Vagina (tissue), 2 donors: ENCODE measurements at regions of chr1 and their contacts with region 1.

Region 1: GRCh38 chr1:209692745-209693504 is 11.7 kb upstream of the HSD11B1 start:
- DNase-seq: no peak
- H3K4me3 ChIP-seq: no peak overlapping the region
- H3K27ac ChIP-seq: no peak overlapping the region
- H3K4me1 ChIP-seq: peaks cover 7% of the 10 kb centered on the region
- H3K27me3 ChIP-seq: no peaks in the 10 kb centered on the region
- CTCF ChIP-seq: peak; percentile 66 to 93 (median 71)
- POLR2A ChIP-seq: no peak

Region 2: GRCh38 chr1:209576798-209577197 is 116.1 kb before region 1 on chr1:
- intact Hi-C with region 1: loop called (anchors 5 kb)
- DNase-seq: no peak
- H3K4me3 ChIP-seq: no peak overlapping the region
- H3K27ac ChIP-seq: no peak overlapping the region
- H3K4me1 ChIP-seq: no peaks in the 10 kb centered on the region
- H3K27me3 ChIP-seq: no peaks in the 10 kb centered on the region
- CTCF ChIP-seq: peak; percentile 77 to 93 (median 81)
- POLR2A ChIP-seq: no peak

Region 3: DNA sequence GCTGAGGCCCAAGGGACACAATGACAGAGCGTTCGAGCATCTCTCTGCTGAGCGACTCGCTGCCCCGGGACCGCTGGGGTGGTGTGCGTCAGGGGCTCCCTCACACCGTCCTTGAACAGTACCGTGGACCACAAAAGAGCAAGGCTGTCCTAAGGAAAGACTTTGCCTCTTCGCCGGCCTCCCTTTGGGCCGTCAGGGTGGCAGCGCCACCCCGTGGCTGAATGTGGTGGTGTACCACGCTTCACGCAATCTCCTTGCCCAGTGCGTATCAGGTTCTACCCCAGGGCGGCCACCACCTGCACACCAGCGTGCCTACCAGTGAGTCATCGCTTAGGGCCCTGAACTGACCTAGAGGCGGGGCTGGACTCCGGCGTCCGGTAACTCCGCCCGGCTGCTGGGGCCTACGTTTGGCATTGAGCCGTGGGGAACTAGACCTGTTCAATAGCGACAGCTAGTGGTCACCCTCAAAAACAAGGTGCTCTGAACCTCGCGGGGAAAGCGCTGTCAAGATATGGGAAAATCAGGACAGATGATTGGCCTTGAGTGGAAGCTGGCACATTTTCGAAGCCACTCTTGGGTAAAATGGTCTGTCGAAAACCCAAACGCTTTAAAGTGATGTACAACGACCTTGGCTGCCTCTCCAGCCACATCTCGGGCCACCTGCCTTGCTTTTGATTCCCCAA is 54.8 kb after region 1 on chr1:
- intact Hi-C with region 1: loop called (anchors 10 kb)
- DNase-seq: no peak
- H3K4me3 ChIP-seq: peak overlapping the region in 1 of 2 donors; percentile 36
- H3K27ac ChIP-seq: peak overlapping the region; percentile 33
- H3K4me1 ChIP-seq: peaks cover 6% of the 10 kb centered on the region
- H3K27me3 ChIP-seq: no peaks in the 10 kb centered on the region
- CTCF ChIP-seq: peak; percentile 71 to 96 (median 81)
- POLR2A ChIP-seq: no peak